ENCODE measurements at regions of chr22 and their contacts with region 1.

Region 1: DNA sequence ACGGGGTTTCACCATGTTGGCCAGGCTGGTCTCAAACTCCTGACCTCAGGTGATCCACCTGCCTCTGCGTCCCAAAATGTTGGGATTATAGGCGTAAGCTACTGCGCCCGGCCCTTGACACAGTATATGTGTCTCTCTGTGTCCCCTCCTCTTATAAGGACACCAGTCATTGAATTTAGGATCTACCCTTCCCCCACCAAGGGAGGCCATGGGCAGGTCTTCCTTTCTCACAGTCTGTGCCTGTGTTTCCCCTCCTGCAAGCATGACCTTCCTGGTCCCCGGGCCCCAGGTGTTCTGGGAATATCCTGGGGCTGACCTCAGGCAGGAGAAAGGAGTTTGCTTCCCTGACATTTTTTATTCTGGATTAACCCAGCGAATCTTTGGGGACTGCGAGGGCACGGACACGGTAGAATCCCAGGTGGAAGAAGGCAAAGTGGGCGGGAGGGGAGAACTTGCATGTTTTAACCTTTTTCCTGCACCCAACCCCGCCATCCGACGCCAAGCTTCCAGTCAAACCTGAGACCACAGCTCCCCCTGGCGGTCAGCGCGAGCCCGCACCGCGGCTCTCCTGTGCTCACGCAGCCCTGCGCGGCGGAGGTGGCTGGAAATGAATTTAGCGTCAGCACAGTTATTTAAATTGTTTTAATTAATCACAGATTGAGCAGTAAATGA is 42.1 kb upstream of the ISX start:
- DNase-seq: peak; percentile 39
- H3K4me3 Mint-ChIP-seq: no peak overlapping the region
- H3K27ac Mint-ChIP-seq: no peak overlapping the region
- H3K4me1 Mint-ChIP-seq: peaks cover 6% of the 10 kb centered on the region
- H3K27me3 Mint-ChIP-seq: peaks cover 4% of the 10 kb centered on the region

Region 2: DNA sequence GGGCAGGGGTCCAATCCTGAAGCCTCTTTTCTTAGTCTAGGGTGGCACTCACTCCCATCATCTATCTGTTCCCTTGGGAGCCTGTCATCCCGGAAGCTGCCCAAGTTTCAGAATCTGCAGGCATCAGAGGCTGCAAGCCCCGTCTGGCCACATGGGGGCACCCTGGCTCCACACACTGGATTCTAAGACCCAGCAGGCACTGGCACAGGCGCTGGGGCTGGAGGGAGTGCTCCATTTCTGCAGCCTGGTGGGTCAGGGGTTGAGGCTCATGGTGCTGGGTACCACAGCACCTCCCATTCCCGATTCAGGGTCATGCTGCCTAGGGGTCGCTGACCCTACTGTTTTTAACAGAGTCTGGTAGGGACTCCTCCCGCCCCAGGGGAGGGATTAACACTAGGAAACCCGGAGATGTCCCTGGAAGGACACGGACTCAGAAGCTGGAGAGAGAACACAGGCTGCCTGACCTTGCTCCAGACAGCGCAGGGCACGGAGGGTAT is 1721.7 kb before region 1 on chr22:
- intact Hi-C with region 1: loop called (anchors 5 kb)
- DNase-seq: peak; percentile 23
- H3K4me3 Mint-ChIP-seq: no peak overlapping the region
- H3K27ac Mint-ChIP-seq: no peak overlapping the region
- H3K4me1 Mint-ChIP-seq: no peaks in the 10 kb centered on the region
- H3K27me3 Mint-ChIP-seq: no peaks in the 10 kb centered on the region

Region 3: GRCh38 chr22:34414484-34415440 is 609.1 kb before region 1 on chr22:
- intact Hi-C with region 1: loop called (anchors 10 kb)
- DNase-seq: no peak
- H3K4me3 Mint-ChIP-seq: no peak overlapping the region
- H3K27ac Mint-ChIP-seq: no peak overlapping the region
- H3K4me1 Mint-ChIP-seq: no peaks in the 10 kb centered on the region
- H3K27me3 Mint-ChIP-seq: no peaks in the 10 kb centered on the region

Region 4: GRCh38 chr22:34975721-34976120 is 48.1 kb before region 1 on chr22:
- intact Hi-C with region 1: no loop called
- DNase-seq: no peak
- H3K4me3 Mint-ChIP-seq: no peak overlapping the region
- H3K27ac Mint-ChIP-seq: no peak overlapping the region
- H3K4me1 Mint-ChIP-seq: no peaks in the 10 kb centered on the region
- H3K27me3 Mint-ChIP-seq: no peaks in the 10 kb centered on the region

Region 5: DNA sequence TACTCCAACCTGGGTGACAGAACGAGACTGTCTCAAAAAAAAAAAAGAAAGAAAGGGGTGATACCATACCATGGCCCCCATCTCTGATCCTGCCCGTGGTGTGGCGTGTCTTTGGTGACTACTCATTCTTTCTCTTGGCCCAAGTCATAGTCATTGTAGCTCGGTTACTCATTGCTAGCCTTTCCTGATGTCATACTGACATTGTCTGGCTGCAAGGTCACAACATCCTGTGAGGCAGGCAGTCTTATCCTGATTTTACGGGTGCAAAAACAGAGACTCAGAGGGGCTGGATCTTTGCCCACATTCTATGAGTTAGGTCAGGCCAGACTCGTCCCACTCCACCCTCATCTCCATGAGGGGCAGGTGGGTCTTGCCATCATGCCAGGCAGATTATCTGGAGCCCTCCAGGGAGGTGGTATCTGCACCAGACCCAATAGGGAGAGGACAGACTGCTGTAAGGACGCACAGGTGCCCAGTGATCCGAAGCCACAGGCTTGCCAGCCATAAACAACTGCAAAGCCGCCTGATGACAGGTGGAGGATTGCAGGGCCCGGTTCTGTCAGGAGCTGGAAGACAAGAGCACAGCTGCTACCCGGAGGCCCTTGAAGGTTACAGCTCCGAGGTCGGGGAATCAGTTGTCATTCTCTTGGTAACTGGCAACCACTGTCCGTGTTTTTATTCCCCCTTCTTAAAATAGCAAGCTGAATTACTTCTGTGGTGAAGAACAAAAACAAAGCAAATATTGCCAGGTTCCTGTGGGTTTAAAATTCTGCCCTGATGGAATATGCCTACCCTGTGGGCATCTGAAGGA is 289.7 kb after region 1 on chr22:
- intact Hi-C with region 1: no loop called
- DNase-seq: no peak
- H3K4me3 Mint-ChIP-seq: no peak overlapping the region
- H3K27ac Mint-ChIP-seq: peak overlapping the region; percentile 69
- H3K4me1 Mint-ChIP-seq: peaks cover 62% of the 10 kb centered on the region
- H3K27me3 Mint-ChIP-seq: no peaks in the 10 kb centered on the region